ENCODE measurements at regions of chr9 and their contacts with region 1.

Region 1: GRCh38 chr9:114348906-114349482 is 19.3 kb downstream of the ORM2 start:
- DNase-seq: peak; percentile 98
- H3K4me3 ChIP-seq: no peak overlapping the region
- CTCF ChIP-seq: no peak

Region 2: DNA sequence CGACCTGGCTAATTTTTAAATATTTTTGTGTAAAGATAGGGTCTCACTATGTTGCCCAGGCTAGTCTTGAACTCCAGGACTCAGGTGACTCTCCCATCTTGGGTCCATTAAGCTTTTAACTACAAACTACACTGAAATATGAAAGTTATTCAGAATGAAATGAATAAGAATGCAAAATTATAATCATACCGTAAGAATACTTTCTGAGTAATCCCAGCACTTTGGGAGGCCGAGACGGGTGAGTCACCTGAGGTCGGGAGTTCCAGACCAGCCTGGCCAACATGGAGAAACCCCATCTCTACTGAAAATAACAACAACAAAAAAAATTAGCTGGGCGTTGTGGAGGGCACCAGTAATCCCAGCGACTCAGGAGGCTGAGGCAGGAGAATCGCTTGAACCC is 27.2 kb before region 1 on chr9:
- CTCF ChIA-PET with region 1: no interaction called
- POLR2A ChIA-PET with region 1: no interaction called
- DNase-seq: no peak
- H3K4me3 ChIP-seq: no peak overlapping the region
- CTCF ChIP-seq: no peak

Region 3: DNA sequence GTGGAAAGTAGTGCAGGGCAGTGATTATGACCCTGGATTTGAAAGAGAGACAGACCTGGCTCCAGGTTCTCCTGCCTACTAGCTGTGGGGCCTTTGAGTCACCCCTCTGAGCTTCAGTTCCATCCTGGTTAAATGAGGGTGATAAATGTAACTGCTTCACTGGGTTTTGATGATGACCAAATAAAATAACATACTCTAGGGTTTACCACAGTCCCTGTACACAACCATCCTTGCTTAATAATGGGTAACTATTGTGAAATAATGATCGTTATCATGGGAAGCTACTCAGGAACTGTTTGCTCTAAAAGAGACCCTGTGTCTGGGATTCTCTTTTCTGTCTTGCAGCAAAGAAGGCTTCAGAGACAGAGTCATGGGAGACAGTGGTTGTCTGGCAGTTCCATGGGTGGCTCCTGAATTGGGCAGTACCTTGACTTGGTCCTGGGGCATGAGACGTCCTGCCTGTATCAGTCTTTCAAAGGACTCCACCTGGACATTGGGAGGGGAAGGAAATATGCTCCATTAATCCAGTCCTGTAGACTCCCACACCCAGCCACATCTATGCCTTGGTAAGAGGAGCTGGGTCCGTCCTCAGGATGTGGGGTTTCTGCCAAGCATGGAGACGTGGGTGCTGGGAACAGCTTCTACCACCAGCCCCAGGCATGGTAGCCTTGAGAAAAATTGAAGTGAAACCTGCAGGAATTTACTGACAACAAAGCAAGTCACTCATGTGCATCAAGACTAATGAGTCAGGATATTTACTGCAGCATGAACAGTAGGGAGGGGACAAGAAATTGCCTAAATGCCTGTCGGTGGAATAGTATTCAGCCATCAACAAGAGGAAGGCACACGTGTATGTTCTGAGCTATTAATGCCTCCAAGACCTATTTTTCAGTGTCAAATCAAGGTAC is 15.4 kb after region 1 on chr9:
- CTCF ChIA-PET with region 1: interaction called, 14 read pairs
- POLR2A ChIA-PET with region 1: interaction called, 4 read pairs
- DNase-seq: peak; percentile 85
- H3K4me3 ChIP-seq: no peak overlapping the region
- CTCF ChIP-seq: no peak

Region 4: DNA sequence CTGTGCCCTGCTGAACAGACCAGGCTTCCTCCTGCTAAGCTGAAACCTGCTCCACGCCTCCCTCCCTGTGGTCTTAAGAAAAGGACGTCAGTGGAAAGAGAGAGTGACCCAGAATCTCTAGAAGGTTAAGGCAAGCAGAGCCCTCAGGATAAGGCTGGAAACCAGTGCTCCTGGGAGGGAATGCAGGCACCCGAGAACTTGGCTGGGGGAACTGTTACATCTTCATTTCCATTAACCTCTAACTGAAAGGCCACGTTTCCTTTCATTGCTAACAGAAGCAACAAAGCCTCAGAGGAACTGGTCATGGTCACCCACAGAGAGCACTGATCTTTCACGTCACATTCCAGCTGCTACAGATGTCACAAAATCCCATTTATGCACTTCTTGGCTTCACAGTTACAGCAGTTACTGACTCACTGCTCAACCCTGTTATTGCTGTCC is 64.9 kb after region 1 on chr9:
- CTCF ChIA-PET with region 1: no interaction called
- POLR2A ChIA-PET with region 1: no interaction called
- DNase-seq: no peak
- H3K4me3 ChIP-seq: no peak overlapping the region
- CTCF ChIP-seq: no peak